Ovary (tissue), 10 donors: ENCODE measurements at regions of chr18 and their contacts with region 1.

Region 1: GRCh38 chr18:59802031-59802430 is 97.8 kb upstream of the PMAIP1 start:
- DNase-seq: no peak
- H3K4me3 ChIP-seq: no peak overlapping the region
- H3K27ac ChIP-seq: no peak overlapping the region
- H3K4me1 ChIP-seq: no peaks in the 10 kb centered on the region
- H3K27me3 ChIP-seq: no peaks in the 10 kb centered on the region
- CTCF ChIP-seq: no peak
- EP300 ChIP-seq: no peak
- POLR2A ChIP-seq: no peak

Region 2: DNA sequence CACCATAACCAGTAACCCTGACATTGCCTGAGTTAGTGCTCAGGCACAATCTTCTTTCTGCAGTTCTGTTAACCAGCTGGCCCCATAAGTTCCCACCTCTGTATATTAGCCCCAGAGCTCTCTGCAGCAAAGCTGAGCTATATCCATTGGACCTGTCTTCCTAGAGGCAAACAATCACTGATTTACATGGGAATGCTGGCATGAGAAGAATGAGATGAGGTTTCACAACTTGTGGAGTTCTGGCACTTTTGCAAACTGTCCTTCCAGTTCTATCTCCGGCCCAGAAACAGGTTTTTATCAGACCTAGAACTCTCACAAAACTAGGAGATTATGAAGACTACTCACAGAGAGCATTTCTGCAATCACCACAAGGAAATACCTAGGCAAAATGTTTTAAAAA is 96.9 kb before region 1 on chr18:
- intact Hi-C with region 1: loop called in 1 of 4 experiments (anchors 10 kb)
- DNase-seq: no peak
- H3K4me3 ChIP-seq: no peak overlapping the region
- H3K27ac ChIP-seq: no peak overlapping the region
- H3K4me1 ChIP-seq: peaks cover 3% of the 10 kb centered on the region
- H3K27me3 ChIP-seq: no peaks in the 10 kb centered on the region
- CTCF ChIP-seq: no peak
- EP300 ChIP-seq: no peak
- POLR2A ChIP-seq: no peak

Region 3: DNA sequence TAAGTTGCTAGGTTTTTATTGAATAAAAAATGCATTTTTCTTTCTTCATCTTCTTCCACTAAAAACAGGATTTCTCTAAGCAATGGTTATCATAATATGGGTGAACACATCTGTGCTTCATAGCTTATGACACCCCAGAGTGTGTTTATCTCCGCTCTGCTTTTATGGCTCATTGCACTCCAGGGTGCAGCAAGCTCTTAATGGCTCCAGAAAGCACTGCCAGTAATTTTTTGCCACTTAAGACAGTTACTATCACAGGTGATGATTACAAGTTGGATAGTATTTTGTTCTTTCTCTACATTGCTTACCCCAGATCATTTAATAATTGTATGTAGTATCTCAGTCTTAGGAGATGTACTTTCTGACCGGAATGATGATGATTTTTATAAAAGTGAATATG is 1291.9 kb after region 1 on chr18:
- intact Hi-C with region 1: no loop called
- DNase-seq: no peak
- H3K4me3 ChIP-seq: no peak overlapping the region
- H3K27ac ChIP-seq: no peak overlapping the region
- H3K4me1 ChIP-seq: no peaks in the 10 kb centered on the region
- H3K27me3 ChIP-seq: no peaks in the 10 kb centered on the region
- CTCF ChIP-seq: no peak
- EP300 ChIP-seq: no peak
- POLR2A ChIP-seq: no peak